ENCODE measurements at regions of chr22 and their contacts with region 1.

Region 1: DNA sequence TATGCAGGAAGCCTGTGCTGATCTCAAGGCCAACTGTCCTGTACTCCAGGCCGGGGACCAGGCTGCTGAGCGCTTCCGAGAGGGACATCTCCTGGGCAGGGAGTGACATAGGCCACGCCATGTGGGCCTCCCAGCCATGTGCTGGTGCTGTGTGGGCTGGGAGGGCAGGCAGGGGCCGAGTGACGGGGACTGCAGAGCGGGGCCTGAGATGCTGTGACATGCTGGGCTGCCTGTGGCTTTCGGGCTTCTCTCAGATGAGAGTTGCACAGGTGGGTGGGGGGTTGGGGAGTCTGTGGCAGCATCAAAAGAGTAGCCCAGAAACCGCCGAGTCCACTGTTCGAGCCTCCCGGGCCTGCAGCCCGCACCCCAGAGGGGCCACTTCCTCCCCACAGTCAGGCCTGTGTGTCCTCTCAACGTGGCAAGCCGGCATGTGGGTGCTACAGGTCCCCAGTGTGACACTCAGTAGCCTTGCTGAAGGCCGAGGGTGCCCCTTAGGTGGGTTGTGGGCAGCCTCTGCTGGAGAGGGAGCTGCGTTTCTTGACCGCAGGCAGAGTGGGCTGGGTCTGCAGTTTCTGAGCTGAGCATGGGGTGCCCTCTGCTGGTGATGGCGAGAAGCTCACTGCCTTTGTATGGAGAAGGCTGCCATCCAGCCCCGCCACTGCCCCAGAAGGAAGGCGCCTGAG is 101.2 kb downstream of the BCR start:
- DNase-seq: peak; percentile 53 to 79
- H3K4me3 ChIP-seq: no peak overlapping the region; the same call in 1 of the 2 replicates
- H3K27ac ChIP-seq: peak overlapping the region; percentile 63
- H3K4me1 ChIP-seq: peaks cover 18% of the 10 kb centered on the region
- H3K27me3 ChIP-seq: no peaks in the 10 kb centered on the region
- CTCF ChIP-seq: peak; percentile 94

Region 2: GRCh38 chr22:23248583-23248982 is 33.0 kb before region 1 on chr22:
- CTCF ChIA-PET with region 1: interaction called, 14 read pairs
- POLR2A ChIA-PET with region 1: interaction called, 3 read pairs
- intact Hi-C with region 1: no loop called
- DNase-seq: peak; percentile 57 to 71
- H3K4me3 ChIP-seq: no peak overlapping the region
- H3K27ac ChIP-seq: no peak overlapping the region
- H3K4me1 ChIP-seq: peaks cover 43% of the 10 kb centered on the region
- H3K27me3 ChIP-seq: no peaks in the 10 kb centered on the region
- CTCF ChIP-seq: no peak

Measured in PC-9 (cell line).